IMR-90 (cell line): ENCODE measurements at regions of chrX and their contacts with region 1.

Region 1: GRCh38 chrX:53317365-53318069 is 36.1 kb upstream of the IQSEC2 start:
- DNase-seq: peak; percentile 43
- ATAC-seq: peak; percentile 70
- H3K4me3 ChIP-seq: no peak overlapping the region
- H3K27ac ChIP-seq: no peak overlapping the region
- H3K4me1 ChIP-seq: peaks cover 3% of the 10 kb centered on the region
- H3K27me3 ChIP-seq: peaks cover 45% of the 10 kb centered on the region
- CTCF ChIP-seq: peak; percentile 76
- POLR2A ChIP-seq: no peak
- RAD21 ChIP-seq: peak; percentile 68

Region 2: DNA sequence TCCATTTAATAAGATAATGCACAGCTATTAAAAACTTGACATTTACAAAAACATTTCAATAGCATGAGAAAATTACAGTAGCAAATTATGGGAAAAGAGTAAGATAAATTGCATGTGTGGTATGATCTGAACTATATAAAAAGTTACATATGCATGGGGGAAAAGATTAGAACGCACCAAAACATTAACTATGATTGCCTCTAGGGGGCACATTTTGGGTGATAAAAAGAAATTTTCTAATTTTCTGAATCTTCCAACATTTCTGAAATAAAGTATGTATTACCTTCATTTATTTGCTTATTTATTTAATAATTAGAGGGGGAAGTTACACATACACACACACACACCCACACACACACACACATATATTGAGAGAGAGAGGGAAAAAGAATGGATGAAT is 72.9 kb before region 1 on chrX:
- CTCF ChIA-PET with region 1: no interaction called
- POLR2A ChIA-PET with region 1: no interaction called
- dilution Hi-C with region 1: no loop called
- in situ Hi-C with region 1: no loop called
- intact Hi-C with region 1: loop called (anchors 10 kb)
- DNase-seq: no peak
- ATAC-seq: no peak
- H3K4me3 ChIP-seq: no peak overlapping the region
- H3K27ac ChIP-seq: no peak overlapping the region
- H3K4me1 ChIP-seq: no peaks in the 10 kb centered on the region
- H3K27me3 ChIP-seq: peaks cover 20% of the 10 kb centered on the region; the same call in 1 of the 2 replicates
- CTCF ChIP-seq: peak; percentile 45
- POLR2A ChIP-seq: no peak
- RAD21 ChIP-seq: no peak

Region 3: GRCh38 chrX:53433651-53434639 is 116.4 kb after region 1 on chrX and contains the start of gene HSD17B10:
- CTCF ChIA-PET with region 1: interaction called, 4 read pairs
- POLR2A ChIA-PET with region 1: no interaction called
- dilution Hi-C with region 1: no loop called
- in situ Hi-C with region 1: loop called (anchors 5 kb)
- intact Hi-C with region 1: loop called (anchors 1 kb)
- DNase-seq: peak; percentile 64
- ATAC-seq: peak; percentile 99
- H3K4me3 ChIP-seq: peak within 1 kb of the TSS; percentile 92
- H3K27ac ChIP-seq: peak within 1 kb of the TSS; percentile 78
- H3K4me1 ChIP-seq: no peaks in the 10 kb centered on the region
- H3K27me3 ChIP-seq: peaks cover 20% of the 10 kb centered on the region
- CTCF ChIP-seq: no peak
- POLR2A ChIP-seq: peak; percentile 33; the same call in 1 of the 2 replicates
- RAD21 ChIP-seq: no peak
- total RNA-seq, gene HSD17B10: 80.5 and 99.8 TPM in 2 replicates

Region 4: DNA sequence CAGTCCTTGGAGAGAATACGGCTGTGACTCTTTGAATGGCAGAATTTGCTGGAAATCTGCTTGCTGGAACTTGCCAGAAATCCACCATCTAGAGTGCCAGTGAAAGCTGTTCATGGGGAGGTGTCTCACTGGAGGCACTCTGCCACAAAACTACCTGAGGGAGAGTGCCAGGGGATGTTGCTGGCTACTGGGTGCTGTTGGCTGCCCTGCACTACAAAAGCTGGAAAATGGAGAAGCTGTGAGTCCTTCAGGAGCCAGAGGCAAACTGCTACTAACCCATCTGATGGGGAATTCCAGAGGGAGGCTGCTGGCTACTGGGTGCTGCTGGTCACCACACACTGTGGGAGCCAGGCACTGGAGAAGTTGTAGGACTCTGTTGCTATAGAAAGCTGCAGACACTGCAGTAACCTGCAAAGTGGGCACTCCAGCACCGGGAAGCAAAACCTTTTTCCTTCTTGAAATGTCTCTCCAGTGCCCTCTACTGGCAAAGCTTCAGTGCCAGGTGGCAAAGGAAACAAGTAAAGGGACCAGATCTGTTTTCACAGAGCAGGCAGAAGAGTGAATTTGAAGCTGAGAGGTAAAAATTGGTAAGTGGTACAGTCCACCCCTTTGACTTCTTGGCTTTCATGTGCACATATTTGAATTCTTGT is 164.4 kb after region 1 on chrX:
- CTCF ChIA-PET with region 1: interaction called, 8 read pairs
- POLR2A ChIA-PET with region 1: no interaction called
- dilution Hi-C with region 1: no loop called
- in situ Hi-C with region 1: no loop called
- intact Hi-C with region 1: loop called (anchors 5 kb)
- DNase-seq: peak; percentile 69
- ATAC-seq: peak; percentile 85
- H3K4me3 ChIP-seq: no peak overlapping the region
- H3K27ac ChIP-seq: no peak overlapping the region
- H3K4me1 ChIP-seq: no peaks in the 10 kb centered on the region
- H3K27me3 ChIP-seq: peaks cover 24% of the 10 kb centered on the region
- CTCF ChIP-seq: peak; percentile 74
- POLR2A ChIP-seq: no peak
- RAD21 ChIP-seq: peak; percentile 63

Region 5: GRCh38 chrX:54728425-54728824 is 1410.9 kb after region 1 on chrX:
- CTCF ChIA-PET with region 1: no interaction called
- POLR2A ChIA-PET with region 1: no interaction called
- dilution Hi-C with region 1: no loop called
- in situ Hi-C with region 1: no loop called
- intact Hi-C with region 1: loop called (anchors 5 kb)
- DNase-seq: no peak
- ATAC-seq: no peak
- H3K4me3 ChIP-seq: no peak overlapping the region
- H3K27ac ChIP-seq: no peak overlapping the region
- H3K4me1 ChIP-seq: no peaks in the 10 kb centered on the region
- H3K27me3 ChIP-seq: no peaks in the 10 kb centered on the region; the same call in 1 of the 2 replicates
- CTCF ChIP-seq: no peak
- POLR2A ChIP-seq: no peak
- RAD21 ChIP-seq: no peak